Transverse colon (tissue), 4 donors: ENCODE measurements at regions of chr4 and their contacts with region 1.

Region 1: GRCh38 chr4:34771632-34772031 is 1472.7 kb downstream of the ARAP2 start:
- DNase-seq: no peak
- H3K4me3 ChIP-seq: no peak overlapping the region
- H3K27ac ChIP-seq: no peak overlapping the region
- H3K4me1 ChIP-seq: no peaks in the 10 kb centered on the region
- H3K27me3 ChIP-seq: no peaks in the 10 kb centered on the region
- CTCF ChIP-seq: no peak
- EP300 ChIP-seq: no peak
- POLR2A ChIP-seq: no peak

Region 2: GRCh38 chr4:34720571-34720970 is 51.1 kb before region 1 on chr4:
- in situ Hi-C with region 1: no loop called
- intact Hi-C with region 1: no loop called
- DNase-seq: no peak
- H3K4me3 ChIP-seq: no peak overlapping the region
- H3K27ac ChIP-seq: no peak overlapping the region
- H3K4me1 ChIP-seq: no peaks in the 10 kb centered on the region
- H3K27me3 ChIP-seq: no peaks in the 10 kb centered on the region
- CTCF ChIP-seq: no peak
- EP300 ChIP-seq: no peak
- POLR2A ChIP-seq: no peak

Region 3: DNA sequence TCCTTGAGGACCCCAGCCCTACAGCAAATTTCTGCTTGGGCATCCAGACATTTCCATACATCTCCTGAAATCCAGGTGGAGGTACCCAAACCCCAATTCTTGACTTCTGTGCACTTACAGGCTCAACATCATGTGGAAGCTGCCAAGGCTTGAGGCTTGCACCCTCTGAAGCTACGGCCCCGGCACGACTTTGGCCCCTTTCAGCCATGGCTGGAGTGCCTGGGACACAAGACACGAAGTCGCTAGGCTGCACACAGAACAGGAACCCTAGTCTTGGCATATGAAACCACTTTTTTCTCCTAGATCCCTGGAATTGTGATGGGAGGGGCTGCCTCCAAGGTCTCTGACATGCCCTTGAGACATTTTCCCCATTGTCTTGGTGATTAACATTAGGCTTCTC is 55.0 kb after region 1 on chr4:
- in situ Hi-C with region 1: no loop called
- intact Hi-C with region 1: loop called (anchors 10 kb)
- DNase-seq: no peak
- H3K4me3 ChIP-seq: no peak overlapping the region
- H3K27ac ChIP-seq: no peak overlapping the region
- H3K4me1 ChIP-seq: no peaks in the 10 kb centered on the region
- H3K27me3 ChIP-seq: no peaks in the 10 kb centered on the region
- CTCF ChIP-seq: no peak
- EP300 ChIP-seq: no peak
- POLR2A ChIP-seq: no peak

Region 4: GRCh38 chr4:35080799-35081198 is 309.2 kb after region 1 on chr4:
- in situ Hi-C with region 1: no loop called
- intact Hi-C with region 1: loop called (anchors 5 kb)
- DNase-seq: no peak
- H3K4me3 ChIP-seq: no peak overlapping the region
- H3K27ac ChIP-seq: no peak overlapping the region
- H3K4me1 ChIP-seq: no peaks in the 10 kb centered on the region
- H3K27me3 ChIP-seq: no peaks in the 10 kb centered on the region
- CTCF ChIP-seq: no peak
- EP300 ChIP-seq: no peak
- POLR2A ChIP-seq: no peak

Region 5: GRCh38 chr4:35325908-35326453 is 554.3 kb after region 1 on chr4:
- in situ Hi-C with region 1: no loop called
- intact Hi-C with region 1: no loop called
- DNase-seq: no peak
- H3K4me3 ChIP-seq: no peak overlapping the region
- H3K27ac ChIP-seq: no peak overlapping the region
- H3K4me1 ChIP-seq: no peaks in the 10 kb centered on the region
- H3K27me3 ChIP-seq: no peaks in the 10 kb centered on the region
- CTCF ChIP-seq: no peak
- EP300 ChIP-seq: no peak
- POLR2A ChIP-seq: no peak